ENCODE measurements at regions of chr2 and their contacts with region 1.

Region 1: DNA sequence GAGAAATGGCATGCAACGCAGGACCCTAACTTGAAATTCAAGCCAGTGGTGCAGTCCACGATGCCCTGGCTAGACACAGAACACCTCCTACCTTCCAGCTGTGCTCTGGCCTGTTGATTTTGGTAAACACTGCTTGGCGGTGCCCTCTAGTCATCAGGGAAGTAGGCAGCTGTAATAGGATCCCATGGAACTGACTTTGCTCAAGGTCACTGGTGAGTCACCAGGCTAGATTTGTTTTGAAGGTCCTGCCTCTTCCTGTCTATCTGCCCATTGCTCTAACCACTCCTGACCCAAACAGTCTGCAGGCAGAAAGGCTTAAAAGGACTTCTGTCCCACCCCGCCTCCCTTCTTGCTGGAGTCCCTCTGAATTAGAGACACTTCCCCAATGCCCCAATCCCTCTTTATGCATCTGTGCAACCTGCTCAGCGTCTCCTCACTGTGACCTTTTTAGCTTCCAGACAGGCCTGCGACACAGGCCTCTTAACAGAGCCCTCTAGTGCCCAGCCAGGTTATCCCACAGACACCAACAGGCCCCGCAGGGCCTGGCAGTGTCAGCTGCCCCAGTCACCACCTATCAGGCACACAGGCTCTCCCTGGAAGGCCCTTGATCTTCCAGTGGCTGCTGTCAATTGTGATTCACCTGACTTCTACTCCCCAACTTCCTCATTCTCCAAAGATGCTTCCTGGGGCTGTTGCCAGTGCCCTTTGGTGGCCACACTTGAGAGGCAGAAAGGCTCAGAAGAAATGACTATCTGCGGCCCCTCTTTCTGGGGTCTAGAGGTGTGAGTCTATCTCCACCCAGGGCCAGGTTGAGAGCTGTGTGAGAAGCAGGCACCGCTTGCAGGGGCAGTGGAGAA is 5.2 kb downstream of the TMEM127 start:
- DNase-seq: peak; percentile 77
- H3K4me3 ChIP-seq: peak overlapping the region in 1 of 4 donors; percentile 6
- H3K27ac ChIP-seq: peak overlapping the region; percentile 76 to 83 (median 80)
- H3K4me1 ChIP-seq: peaks cover 0 to 76% (median 67%) of the 10 kb centered on the region in 4 donors
- H3K27me3 ChIP-seq: no peaks in the 10 kb centered on the region
- CTCF ChIP-seq: peak in 2 of 4 experiments; percentile 13
- EP300 ChIP-seq: no peak
- POLR2A ChIP-seq: no peak

Region 2: DNA sequence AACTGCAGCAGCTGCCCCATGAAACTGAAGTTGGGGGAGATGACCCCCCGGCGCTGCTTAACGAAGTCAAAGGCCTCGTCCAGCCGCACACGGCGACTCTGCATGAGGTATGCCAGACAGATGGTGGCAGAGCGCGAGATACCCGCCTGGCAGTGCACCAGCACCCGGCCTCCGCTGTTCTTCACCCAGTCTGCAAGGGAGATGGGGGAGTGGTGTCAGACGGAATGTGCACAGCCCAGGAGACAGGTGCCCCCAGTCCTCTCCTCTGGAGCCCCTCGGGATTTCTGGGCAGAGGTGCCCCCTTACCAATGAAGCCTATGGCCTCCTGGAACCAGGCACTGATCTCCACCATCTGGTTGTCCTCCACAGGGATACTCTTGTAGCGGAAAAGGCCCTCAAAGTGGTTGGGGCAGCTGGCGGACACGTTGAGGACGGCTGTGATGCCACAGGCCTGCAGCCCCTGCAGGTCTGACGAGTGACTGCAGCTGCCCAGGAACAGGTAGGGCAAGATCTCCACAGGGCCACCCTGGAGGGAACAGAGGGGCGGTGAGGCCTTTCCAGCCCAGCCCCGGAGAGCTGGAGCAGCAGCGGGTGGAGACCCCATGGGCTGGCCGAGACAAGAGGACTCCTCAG is 116.7 kb before region 1 on chr2:
- intact Hi-C with region 1: loop called (anchors 5 kb)
- DNase-seq: peak; percentile 59
- H3K4me3 ChIP-seq: peak overlapping the region in 3 of 4 donors; percentile 52 to 70 (median 62)
- H3K27ac ChIP-seq: no peak overlapping the region
- H3K4me1 ChIP-seq: peaks cover 0 to 17% (median 15%) of the 10 kb centered on the region in 4 donors
- H3K27me3 ChIP-seq: peaks cover 0 to 7% (median 0%) of the 10 kb centered on the region in 3 donors
- CTCF ChIP-seq: no peak
- EP300 ChIP-seq: no peak
- POLR2A ChIP-seq: no peak

Region 3: DNA sequence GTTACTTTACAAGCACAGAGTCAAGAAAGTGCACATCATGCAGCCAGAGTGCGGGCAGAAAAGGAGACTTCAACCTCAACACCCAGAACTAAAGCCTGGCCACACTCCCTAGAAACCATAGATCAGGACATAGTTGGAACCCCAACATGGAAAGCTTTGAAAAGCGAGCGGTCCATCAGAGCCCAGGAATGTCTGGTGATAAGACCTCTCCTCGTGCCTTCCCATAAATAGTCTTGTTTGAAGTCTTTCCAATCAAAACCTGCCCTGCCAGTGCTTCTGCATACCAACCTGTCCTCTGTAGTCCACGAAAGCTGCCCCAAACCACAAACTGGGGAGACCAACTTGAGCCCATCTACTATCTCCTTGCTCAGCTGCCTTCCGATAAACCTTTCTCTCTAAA is 189.0 kb after region 1 on chr2:
- intact Hi-C with region 1: no loop called
- DNase-seq: no peak
- H3K4me3 ChIP-seq: no peak overlapping the region
- H3K27ac ChIP-seq: no peak overlapping the region
- H3K4me1 ChIP-seq: no peaks in the 10 kb centered on the region
- H3K27me3 ChIP-seq: no peaks in the 10 kb centered on the region
- CTCF ChIP-seq: no peak
- EP300 ChIP-seq: no peak
- POLR2A ChIP-seq: no peak